ENCODE measurements at regions of chr19 and their contacts with region 1.

Region 1: DNA sequence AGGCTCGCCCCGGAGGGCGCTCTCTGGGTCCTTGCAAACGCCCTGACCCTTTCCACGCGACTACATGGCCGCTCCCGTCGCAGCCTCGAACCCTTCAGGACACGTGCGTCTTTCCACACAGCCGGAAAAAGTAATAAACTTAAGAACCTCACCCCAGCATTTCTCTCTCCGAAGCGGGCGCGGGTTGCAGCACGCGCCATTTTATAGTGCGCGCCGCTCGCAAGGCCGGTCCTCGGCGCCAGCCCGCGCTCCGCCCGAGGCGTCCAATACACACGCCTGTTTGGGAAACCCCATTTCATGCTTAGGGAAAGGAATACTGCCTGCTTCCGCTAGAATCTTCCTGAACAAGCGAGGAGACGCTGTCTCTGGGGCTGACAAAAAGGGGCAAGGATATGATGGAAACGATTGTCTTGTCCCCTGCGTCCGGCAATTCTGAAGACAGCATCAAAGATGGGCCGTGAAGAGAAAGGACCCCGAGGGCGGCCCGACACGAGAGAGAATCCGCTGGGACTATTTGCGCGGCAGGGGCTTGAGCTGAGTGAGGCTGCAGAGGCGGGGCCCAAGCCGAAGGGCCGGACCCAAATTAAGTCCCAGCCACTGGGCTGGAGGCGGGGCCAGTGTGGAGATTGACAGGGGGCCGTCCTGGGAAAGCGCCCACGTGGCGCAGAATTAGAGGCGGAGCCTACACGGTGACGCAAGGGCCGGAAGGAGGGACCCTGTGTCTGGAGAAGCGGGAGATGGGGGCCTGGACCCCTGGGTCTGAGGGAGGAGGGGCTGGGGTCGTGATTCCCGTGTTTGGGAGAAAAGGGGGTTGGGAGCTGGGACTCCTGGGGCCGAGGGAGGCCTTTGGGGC is 14.4 kb downstream of the ACP4 start:
- DNase-seq: peak; percentile 97
- H3K4me3 Mint-ChIP-seq: peak overlapping the region; percentile 96
- H3K27ac Mint-ChIP-seq: peak overlapping the region; percentile 98
- H3K4me1 Mint-ChIP-seq: peaks cover 27% of the 10 kb centered on the region
- H3K27me3 Mint-ChIP-seq: no peaks in the 10 kb centered on the region

Region 2: GRCh38 chr19:50383852-50384684 is 420.6 kb before region 1 on chr19 and contains the start of gene POLD1:
- intact Hi-C with region 1: loop called (anchors 1 kb)
- DNase-seq: peak; percentile 99
- H3K4me3 Mint-ChIP-seq: peak within 1 kb of the TSS; percentile 91
- H3K27ac Mint-ChIP-seq: peak within 1 kb of the TSS; percentile 96
- H3K4me1 Mint-ChIP-seq: peaks cover 28% of the 10 kb centered on the region
- H3K27me3 Mint-ChIP-seq: no peaks in the 10 kb centered on the region
- total RNA-seq, gene POLD1: 171 and 178 TPM in 2 replicates

Region 3: DNA sequence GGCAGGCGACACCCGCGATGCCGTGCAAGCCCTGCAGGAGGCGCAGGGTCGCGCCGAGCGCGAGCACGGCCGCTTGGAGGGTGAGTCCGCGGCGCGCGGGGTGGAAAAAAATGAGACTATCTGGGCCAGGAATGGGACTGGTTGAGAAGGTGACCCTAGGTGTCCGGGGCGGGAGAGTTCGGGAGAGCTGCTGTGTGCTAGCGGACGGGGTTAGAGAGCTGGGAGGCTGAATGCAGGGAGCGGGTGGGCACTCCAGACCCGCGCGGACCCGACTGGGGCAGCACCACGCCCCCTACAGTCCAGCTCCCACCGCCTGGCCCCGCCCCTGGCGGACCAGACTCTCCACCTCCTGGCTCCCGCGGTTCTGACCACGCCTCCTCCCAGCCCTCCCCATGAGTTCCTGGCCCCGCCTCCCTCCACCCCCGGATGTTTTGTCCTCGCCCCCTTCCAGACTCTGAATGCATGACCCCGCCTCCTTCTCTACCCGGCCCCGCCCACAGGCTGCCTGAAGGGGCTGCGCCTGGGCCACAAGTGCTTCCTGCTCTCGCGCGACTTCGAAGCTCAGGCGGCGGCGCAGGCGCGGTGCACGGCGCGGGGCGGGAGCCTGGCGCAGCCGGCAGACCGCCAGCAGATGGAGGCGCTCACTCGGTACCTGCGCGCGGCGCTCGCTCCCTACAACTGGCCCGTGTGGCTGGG is 80.0 kb before region 1 on chr19:
- intact Hi-C with region 1: loop called (anchors 1 kb)
- DNase-seq: peak; percentile 97
- H3K4me3 Mint-ChIP-seq: peak overlapping the region; percentile 85
- H3K27ac Mint-ChIP-seq: peak overlapping the region; percentile 78
- H3K4me1 Mint-ChIP-seq: no peaks in the 10 kb centered on the region
- H3K27me3 Mint-ChIP-seq: peaks cover 38% of the 10 kb centered on the region

Region 4: GRCh38 chr19:50817941-50818858 is 13.6 kb after region 1 on chr19:
- intact Hi-C with region 1: loop called (anchors 1 kb)
- DNase-seq: peak; percentile 56
- H3K4me3 Mint-ChIP-seq: peak overlapping the region; percentile 77
- H3K27ac Mint-ChIP-seq: peak overlapping the region; percentile 77
- H3K4me1 Mint-ChIP-seq: peaks cover 41% of the 10 kb centered on the region
- H3K27me3 Mint-ChIP-seq: peaks cover 39% of the 10 kb centered on the region

Region 5: DNA sequence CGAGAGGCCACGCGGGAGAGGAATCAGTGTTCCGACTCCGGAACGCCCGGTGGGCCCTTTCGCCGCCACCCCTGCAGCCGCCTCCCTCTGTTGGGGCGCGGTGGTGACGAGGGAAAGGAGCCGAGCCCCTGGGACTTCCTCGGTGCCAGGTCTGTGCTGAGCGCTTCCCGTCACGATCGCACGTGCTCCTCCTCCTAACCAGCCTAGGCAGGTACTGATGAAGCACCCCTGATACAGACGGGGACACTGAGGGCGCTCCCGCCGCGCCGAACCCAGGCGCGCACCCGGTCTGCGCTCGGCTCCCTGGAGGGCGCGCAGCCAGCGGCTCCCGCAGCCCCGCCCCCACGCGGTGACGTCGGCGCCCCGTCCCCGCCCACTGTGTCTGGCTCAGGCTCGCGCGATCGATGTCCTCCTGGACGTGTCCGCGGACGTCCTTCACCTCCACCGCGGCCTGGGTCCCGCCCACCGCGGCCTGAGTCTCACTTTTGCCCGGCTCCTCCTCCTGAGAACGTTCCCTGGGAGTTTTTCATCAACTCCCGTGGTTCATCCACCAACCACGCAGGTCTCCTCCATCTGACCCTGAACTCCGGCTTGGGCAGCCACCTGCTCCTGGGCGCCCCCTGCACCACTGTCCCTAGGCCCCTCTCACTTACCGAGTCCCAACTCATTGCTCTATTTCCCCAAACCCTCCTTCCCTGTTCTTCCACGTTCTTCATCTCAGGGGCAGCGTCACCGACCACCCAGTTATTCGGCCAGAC is 31.3 kb after region 1 on chr19:
- intact Hi-C with region 1: loop called (anchors 1 kb)
- DNase-seq: peak; percentile 78
- H3K4me3 Mint-ChIP-seq: peak overlapping the region; percentile 84
- H3K27ac Mint-ChIP-seq: no peak overlapping the region
- H3K4me1 Mint-ChIP-seq: peaks cover 16% of the 10 kb centered on the region
- H3K27me3 Mint-ChIP-seq: peaks cover 31% of the 10 kb centered on the region

Measured in activated T-helper 1 cell treated with anti-CD3 and anti-CD28 coated beads, Interleukin-12 subunit alpha, Interleukin-12 subunit beta, Interleukin-2, Interleukin-4 antibody, amounts not matched to agents 30 ng/mL and 10 ng/mL and 1 ng/mL, durations not matched to agents 14 hours and 24 hours and 36 hours (primary cell).